CD8-positive, alpha-beta T cell (primary cell): ENCODE measurements at regions of chr21 and their contacts with region 1.

Region 1: GRCh38 chr21:39221282-39221996 is 38.2 kb upstream of the PSMG1 start:
- DNase-seq: peak in 1 of 9 experiments; percentile 4
- ATAC-seq: no peak
- H3K4me3 ChIP-seq: no peak overlapping the region
- H3K4me3 Mint-ChIP-seq: no peak overlapping the region
- H3K27ac ChIP-seq: no peak overlapping the region
- H3K27ac Mint-ChIP-seq: no peak overlapping the region
- H3K4me1 ChIP-seq: no peaks in the 10 kb centered on the region
- H3K4me1 Mint-ChIP-seq: peaks cover 9% of the 10 kb centered on the region
- H3K27me3 ChIP-seq: no peaks in the 10 kb centered on the region
- H3K27me3 Mint-ChIP-seq: no peaks in the 10 kb centered on the region
- CTCF ChIP-seq: no peak

Region 2: GRCh38 chr21:39175154-39175553 is 46.3 kb before region 1 on chr21:
- CTCF ChIA-PET with region 1: no interaction called
- POLR2A ChIA-PET with region 1: no interaction called
- intact Hi-C with region 1: no loop called
- DNase-seq: peak in 2 of 9 experiments; percentile 25 to 34
- ATAC-seq: no peak
- H3K4me3 ChIP-seq: no peak overlapping the region
- H3K4me3 Mint-ChIP-seq: no peak overlapping the region
- H3K27ac ChIP-seq: no peak overlapping the region
- H3K27ac Mint-ChIP-seq: no peak overlapping the region
- H3K4me1 ChIP-seq: peaks cover 2% of the 10 kb centered on the region
- H3K4me1 Mint-ChIP-seq: peaks cover 2% of the 10 kb centered on the region
- H3K27me3 ChIP-seq: no peaks in the 10 kb centered on the region
- H3K27me3 Mint-ChIP-seq: no peaks in the 10 kb centered on the region
- CTCF ChIP-seq: peak; percentile 66

Region 3: DNA sequence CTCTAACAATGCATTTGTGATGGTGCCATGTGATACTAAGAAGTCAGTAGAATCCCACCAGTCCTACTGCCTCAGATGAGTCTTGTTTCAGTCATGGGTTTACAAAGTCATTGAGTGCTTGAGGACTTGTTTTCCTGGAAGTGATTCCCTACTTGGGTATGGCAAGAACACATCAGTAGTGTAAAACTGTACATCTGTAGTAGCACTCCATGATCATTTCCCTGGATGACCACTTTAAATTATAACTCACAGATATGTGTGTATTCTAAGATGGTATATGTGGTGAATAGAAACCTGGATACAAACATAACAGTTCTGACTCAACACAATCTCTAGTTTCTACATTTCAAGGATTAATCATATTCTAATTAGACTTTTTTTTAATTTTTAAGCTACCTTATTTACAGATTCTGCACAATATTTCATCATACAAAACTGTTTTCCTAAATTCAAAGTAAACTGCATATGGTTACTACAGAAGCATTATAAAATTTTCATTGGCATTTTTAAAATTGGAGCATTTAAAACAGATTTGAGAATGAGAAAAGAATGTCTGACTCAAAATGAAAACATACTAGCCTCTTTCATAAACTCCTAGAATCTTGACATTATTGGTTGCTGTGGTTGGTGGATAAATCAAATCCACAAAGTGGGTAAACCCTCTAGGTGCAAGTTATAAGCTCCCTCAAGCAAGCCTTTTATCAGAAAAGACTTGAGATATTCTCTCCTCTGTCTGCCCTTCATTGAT is 31.4 kb before region 1 on chr21:
- CTCF ChIA-PET with region 1: no interaction called
- POLR2A ChIA-PET with region 1: no interaction called
- intact Hi-C with region 1: loop called in 1 of 2 experiments (anchors 5 kb)
- DNase-seq: no peak
- ATAC-seq: no peak
- H3K4me3 ChIP-seq: no peak overlapping the region
- H3K4me3 Mint-ChIP-seq: no peak overlapping the region
- H3K27ac ChIP-seq: no peak overlapping the region
- H3K27ac Mint-ChIP-seq: peak overlapping the region; percentile 35
- H3K4me1 ChIP-seq: no peaks in the 10 kb centered on the region
- H3K4me1 Mint-ChIP-seq: peaks cover 22% of the 10 kb centered on the region
- H3K27me3 ChIP-seq: no peaks in the 10 kb centered on the region
- H3K27me3 Mint-ChIP-seq: no peaks in the 10 kb centered on the region
- CTCF ChIP-seq: no peak

Region 4: DNA sequence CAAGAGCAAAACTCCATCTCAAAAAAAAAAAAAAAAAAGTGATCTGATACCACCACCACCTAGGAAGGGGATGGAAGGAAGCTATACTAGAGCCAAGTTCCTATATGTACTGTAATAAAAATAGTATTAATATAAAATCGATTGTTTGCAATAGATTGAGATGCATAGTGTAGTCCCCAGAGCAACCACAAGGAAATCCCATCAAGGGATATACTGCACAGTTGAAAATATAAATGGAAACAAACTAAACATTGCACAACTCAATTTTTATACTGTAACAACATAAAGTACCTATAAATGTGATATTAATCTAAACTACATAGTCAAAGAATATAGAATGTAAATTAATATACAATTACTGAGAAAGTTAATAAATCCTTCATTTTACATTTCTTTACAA is 17.3 kb before region 1 on chr21:
- CTCF ChIA-PET with region 1: no interaction called
- POLR2A ChIA-PET with region 1: no interaction called
- intact Hi-C with region 1: no loop called
- DNase-seq: no peak
- ATAC-seq: peak; percentile 46
- H3K4me3 ChIP-seq: no peak overlapping the region
- H3K4me3 Mint-ChIP-seq: no peak overlapping the region
- H3K27ac ChIP-seq: no peak overlapping the region
- H3K27ac Mint-ChIP-seq: no peak overlapping the region
- H3K4me1 ChIP-seq: no peaks in the 10 kb centered on the region
- H3K4me1 Mint-ChIP-seq: peaks cover 9% of the 10 kb centered on the region
- H3K27me3 ChIP-seq: no peaks in the 10 kb centered on the region
- H3K27me3 Mint-ChIP-seq: no peaks in the 10 kb centered on the region
- CTCF ChIP-seq: peak; percentile 29

Region 5: DNA sequence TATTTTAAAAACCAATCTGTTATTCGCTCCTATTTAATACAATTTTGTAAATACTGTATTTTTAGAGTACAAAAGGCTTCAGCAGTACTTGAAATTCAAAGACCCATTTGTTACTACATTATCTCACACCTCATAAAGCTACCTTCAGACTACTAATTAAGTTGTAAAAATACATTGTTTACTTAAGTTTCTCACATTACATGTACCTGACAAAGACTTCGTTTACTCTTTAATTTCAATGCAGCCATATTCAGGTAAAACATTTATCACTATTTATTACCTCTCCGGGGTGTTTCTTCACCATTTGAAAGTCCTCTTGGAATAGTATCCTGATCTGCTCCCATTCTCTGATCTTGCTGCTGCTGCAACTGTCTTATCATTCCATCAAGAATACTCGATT is 36.8 kb after region 1 on chr21:
- CTCF ChIA-PET with region 1: no interaction called
- POLR2A ChIA-PET with region 1: no interaction called
- intact Hi-C with region 1: loop called (anchors 5 kb)
- DNase-seq: no peak
- ATAC-seq: no peak
- H3K4me3 ChIP-seq: no peak overlapping the region
- H3K4me3 Mint-ChIP-seq: no peak overlapping the region
- H3K27ac ChIP-seq: no peak overlapping the region
- H3K27ac Mint-ChIP-seq: no peak overlapping the region
- H3K4me1 ChIP-seq: no peaks in the 10 kb centered on the region
- H3K4me1 Mint-ChIP-seq: peaks cover 13% of the 10 kb centered on the region
- H3K27me3 ChIP-seq: no peaks in the 10 kb centered on the region
- H3K27me3 Mint-ChIP-seq: no peaks in the 10 kb centered on the region
- CTCF ChIP-seq: no peak

Region 6: DNA sequence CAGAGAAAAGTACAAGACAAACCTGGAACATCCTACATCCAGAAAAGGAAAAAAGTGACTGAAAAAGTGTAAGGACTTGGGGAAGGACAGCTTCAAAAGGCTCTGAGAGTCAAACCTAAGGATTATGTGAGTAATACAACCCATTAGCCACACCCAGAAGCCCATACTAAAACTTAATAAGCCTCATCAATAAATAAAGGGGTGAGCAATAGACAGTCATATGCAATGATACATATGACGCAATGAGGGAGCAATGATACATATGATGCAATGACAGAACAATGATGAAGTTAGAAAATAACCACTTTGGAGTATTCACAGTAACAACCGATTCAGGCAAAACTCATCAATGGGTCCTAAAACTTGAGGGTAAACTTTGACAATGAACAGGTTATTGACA is 41.9 kb after region 1 on chr21:
- CTCF ChIA-PET with region 1: interaction called, 3 read pairs
- POLR2A ChIA-PET with region 1: no interaction called
- intact Hi-C with region 1: loop called (anchors 5 kb)
- DNase-seq: no peak
- ATAC-seq: no peak
- H3K4me3 ChIP-seq: no peak overlapping the region
- H3K4me3 Mint-ChIP-seq: no peak overlapping the region
- H3K27ac ChIP-seq: no peak overlapping the region
- H3K27ac Mint-ChIP-seq: no peak overlapping the region
- H3K4me1 ChIP-seq: no peaks in the 10 kb centered on the region
- H3K4me1 Mint-ChIP-seq: peaks cover 13% of the 10 kb centered on the region
- H3K27me3 ChIP-seq: no peaks in the 10 kb centered on the region
- H3K27me3 Mint-ChIP-seq: no peaks in the 10 kb centered on the region
- CTCF ChIP-seq: no peak